PC-9 (cell line): ENCODE measurements at regions of chr9 and their contacts with region 1.

Region 1: DNA sequence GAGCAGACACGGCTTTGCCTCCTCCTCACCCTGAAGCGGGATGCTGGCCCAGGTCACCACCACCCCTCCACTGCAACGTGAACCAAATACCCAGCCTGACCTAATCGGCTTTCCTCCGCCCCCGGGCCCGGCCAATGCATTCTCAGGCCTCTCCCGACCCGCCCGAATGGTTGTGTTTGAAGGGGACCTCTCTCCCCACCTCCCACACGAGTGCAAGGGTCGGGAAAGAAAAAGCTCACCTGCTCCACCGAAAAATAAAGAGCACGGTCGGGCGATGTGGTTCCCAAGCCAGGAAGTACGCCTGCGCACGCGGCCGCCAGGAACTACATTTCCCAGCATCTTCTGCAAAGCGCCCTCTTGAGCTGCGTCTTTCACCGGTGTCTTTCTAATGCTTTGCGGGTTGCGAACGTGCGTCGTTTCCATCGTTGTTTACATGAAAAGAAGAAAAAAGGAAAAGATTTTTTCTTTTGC is at the start of gene ZNF883:
- DNase-seq: peak in 1 of 2 experiments; percentile 41
- H3K4me3 ChIP-seq: peak within 1 kb of the TSS; percentile 45; the same call in 1 of the 2 replicates
- H3K27ac ChIP-seq: no peak within 1 kb of the TSS
- H3K4me1 ChIP-seq: no peaks in the 10 kb centered on the region
- H3K27me3 ChIP-seq: peaks cover 8% of the 10 kb centered on the region; the same call in 1 of the 2 replicates
- CTCF ChIP-seq: no peak
- total RNA-seq, gene ZNF883: 1.7 and 2.2 TPM in 2 replicates

Region 2: GRCh38 chr9:112939418-112939817 is 72.5 kb before region 1 on chr9:
- CTCF ChIA-PET with region 1: no interaction called
- POLR2A ChIA-PET with region 1: no interaction called
- intact Hi-C with region 1: no loop called
- DNase-seq: peak in 1 of 2 experiments; percentile 60
- H3K4me3 ChIP-seq: no peak overlapping the region
- H3K27ac ChIP-seq: no peak overlapping the region
- H3K4me1 ChIP-seq: peaks cover 8% of the 10 kb centered on the region; the same call in 1 of the 2 replicates
- H3K27me3 ChIP-seq: peaks cover 13% of the 10 kb centered on the region
- CTCF ChIP-seq: no peak

Region 3: DNA sequence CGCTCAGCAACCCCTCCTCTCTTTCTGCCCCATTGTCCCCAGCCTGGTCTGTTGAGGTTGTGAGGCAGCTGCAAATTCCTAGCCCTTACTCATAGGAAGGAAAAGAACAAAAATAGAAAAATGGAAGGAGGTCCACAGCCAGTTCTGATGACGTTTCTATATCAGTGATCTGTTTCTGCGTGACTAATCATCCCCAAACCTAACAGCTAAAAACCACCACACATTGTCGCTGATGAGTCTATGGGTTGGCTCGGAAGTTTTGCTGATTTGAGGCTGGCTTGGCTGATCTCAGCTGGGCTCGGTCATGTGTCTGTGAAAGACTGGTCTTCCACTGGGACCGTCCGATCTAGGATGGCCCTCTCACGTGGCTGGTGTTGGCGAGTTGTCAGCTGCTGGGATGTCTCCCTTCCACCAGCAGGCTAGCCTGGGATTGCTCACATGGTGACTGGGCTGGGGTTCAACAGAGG is 663.6 kb after region 1 on chr9:
- CTCF ChIA-PET with region 1: interaction called, 11 read pairs
- POLR2A ChIA-PET with region 1: no interaction called
- intact Hi-C with region 1: no loop called
- DNase-seq: peak in 1 of 2 experiments; percentile 15
- H3K4me3 ChIP-seq: no peak overlapping the region
- H3K27ac ChIP-seq: no peak overlapping the region
- H3K4me1 ChIP-seq: no peaks in the 10 kb centered on the region
- H3K27me3 ChIP-seq: peaks cover 89% of the 10 kb centered on the region
- CTCF ChIP-seq: no peak